Activated CD4-positive, alpha-beta T cell treated with anti-CD3 and anti-CD28 coated beads, Interleukin-2, amount 10 ng/mL, durations not matched to agents 24 days and 14 days (primary cell): ENCODE measurements at regions of chr16 and their contacts with region 1.

Region 1: DNA sequence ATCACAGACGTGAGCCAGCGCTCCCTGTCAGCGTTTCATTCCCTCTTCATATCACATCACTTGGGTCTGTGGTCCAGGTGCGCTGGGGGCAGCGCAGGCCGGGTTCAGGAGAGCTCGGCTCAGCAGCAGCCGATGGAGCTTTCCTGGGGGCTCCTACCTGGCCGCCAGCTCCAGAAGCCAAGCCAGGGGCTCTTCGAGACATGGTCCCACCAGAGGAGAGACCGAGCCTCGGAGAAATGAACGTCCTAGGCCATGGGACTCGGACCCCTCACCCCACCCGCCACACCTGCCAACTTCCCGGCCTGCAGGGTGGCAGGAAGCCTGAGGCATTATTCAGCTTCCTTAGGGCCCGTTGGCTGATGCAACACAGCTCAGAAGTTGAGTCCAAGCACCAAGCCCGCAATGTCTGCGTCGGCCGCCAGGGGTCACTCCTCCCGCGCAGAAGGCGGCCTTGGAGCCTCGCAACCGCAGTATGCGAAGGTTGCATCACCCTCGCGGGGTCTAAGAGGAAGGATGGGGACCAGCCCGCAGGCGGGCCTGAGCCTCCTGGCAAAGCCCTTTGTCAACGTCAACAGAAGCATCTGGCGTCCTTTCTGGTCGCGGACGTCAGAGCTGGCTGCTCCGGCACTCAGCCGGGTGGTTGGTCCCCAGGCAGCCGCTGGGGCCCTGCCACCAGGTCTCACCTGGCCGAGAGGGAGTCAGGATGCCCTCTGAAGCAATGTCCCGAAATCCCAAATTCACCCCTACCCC is 13.2 kb upstream of the KLHDC4 start:
- DNase-seq: peak; percentile 98
- H3K4me3 Mint-ChIP-seq: peak overlapping the region; percentile 77
- H3K27ac Mint-ChIP-seq: peak overlapping the region; percentile 96
- H3K4me1 Mint-ChIP-seq: peaks cover 48% of the 10 kb centered on the region
- H3K27me3 Mint-ChIP-seq: no peaks in the 10 kb centered on the region

Region 2: GRCh38 chr16:87636072-87636684 is 142.8 kb before region 1 on chr16:
- intact Hi-C with region 1: no loop called
- DNase-seq: peak; percentile 92
- H3K4me3 Mint-ChIP-seq: peak overlapping the region; percentile 73
- H3K27ac Mint-ChIP-seq: no peak overlapping the region
- H3K4me1 Mint-ChIP-seq: peaks cover 7% of the 10 kb centered on the region
- H3K27me3 Mint-ChIP-seq: peaks cover 6% of the 10 kb centered on the region

Region 3: GRCh38 chr16:87822108-87822970 is 43.3 kb after region 1 on chr16:
- intact Hi-C with region 1: loop called (anchors 5 kb)
- DNase-seq: no peak
- H3K4me3 Mint-ChIP-seq: no peak overlapping the region
- H3K27ac Mint-ChIP-seq: peak overlapping the region; percentile 25
- H3K4me1 Mint-ChIP-seq: peaks cover 6% of the 10 kb centered on the region
- H3K27me3 Mint-ChIP-seq: no peaks in the 10 kb centered on the region

Region 4: DNA sequence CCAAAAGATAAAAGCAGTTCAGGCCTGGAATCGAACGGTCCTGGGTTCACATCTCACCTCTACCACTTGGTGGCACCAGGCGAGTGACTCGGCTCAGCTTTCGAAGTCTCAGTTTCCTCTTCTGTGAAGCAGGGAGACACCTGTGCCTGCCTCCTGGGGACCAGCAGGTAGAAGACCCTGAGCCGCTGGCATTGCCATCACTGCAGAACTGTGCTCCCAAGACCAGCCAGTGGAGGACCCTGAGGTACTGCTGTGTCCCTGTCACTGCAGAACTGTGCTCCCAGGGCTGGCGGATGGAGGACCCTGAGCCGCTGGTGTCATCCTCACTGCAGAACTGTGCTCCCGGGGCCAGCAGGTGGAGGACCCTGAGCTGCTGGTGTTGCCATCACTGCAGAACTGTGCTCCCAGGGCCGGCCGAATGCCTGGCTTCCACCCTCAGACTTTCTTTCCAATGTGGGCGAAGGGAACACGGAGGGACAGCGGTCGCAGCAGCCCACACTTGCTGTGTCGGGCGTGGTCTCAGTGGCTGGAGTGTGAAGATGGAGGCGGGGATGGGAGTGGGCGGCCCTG is 99.0 kb after region 1 on chr16:
- intact Hi-C with region 1: loop called (anchors 1 kb)
- DNase-seq: peak; percentile 80
- H3K4me3 Mint-ChIP-seq: peak overlapping the region; percentile 32
- H3K27ac Mint-ChIP-seq: peak overlapping the region; percentile 73
- H3K4me1 Mint-ChIP-seq: peaks cover 46% of the 10 kb centered on the region
- H3K27me3 Mint-ChIP-seq: no peaks in the 10 kb centered on the region

Region 5: GRCh38 chr16:87950765-87951549 is 172.0 kb after region 1 on chr16 and contains the start of gene BANP:
- intact Hi-C with region 1: loop called (anchors 1 kb)
- DNase-seq: peak; percentile 99
- H3K4me3 Mint-ChIP-seq: peak within 1 kb of the TSS; percentile 95
- H3K27ac Mint-ChIP-seq: peak within 1 kb of the TSS; percentile 99
- H3K4me1 Mint-ChIP-seq: peaks cover 62% of the 10 kb centered on the region
- H3K27me3 Mint-ChIP-seq: no peaks in the 10 kb centered on the region
- total RNA-seq, gene BANP: 36.8 and 44.9 TPM in 2 replicates